ENCODE measurements at regions of chr2 and their contacts with region 1.

Region 1: DNA sequence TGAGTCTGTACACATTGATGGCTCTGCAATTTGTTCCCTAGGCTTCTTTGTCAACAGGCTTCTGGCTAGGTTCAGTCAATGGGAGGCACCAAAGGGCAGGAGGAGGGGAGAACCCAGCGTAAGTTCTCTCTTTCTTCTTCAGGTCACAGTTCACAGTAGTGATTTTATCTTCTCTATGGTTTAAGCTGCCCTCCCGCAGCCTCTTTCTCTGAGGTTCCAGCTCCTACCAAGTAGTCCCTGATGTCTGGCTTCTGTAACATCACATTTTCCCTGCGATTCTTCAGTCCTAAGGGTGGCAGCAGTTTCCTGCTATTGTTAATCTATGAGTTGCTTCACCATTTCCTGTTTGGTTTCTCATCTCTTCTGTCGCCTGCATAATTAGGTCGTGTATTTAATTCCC is 107.4 kb downstream of the CPO start:
- DNase-seq: peak; percentile 59
- H3K4me3 Mint-ChIP-seq: no peak overlapping the region
- H3K27ac Mint-ChIP-seq: peak overlapping the region; percentile 62
- H3K4me1 Mint-ChIP-seq: peaks cover 10% of the 10 kb centered on the region
- H3K27me3 Mint-ChIP-seq: no peaks in the 10 kb centered on the region

Region 2: DNA sequence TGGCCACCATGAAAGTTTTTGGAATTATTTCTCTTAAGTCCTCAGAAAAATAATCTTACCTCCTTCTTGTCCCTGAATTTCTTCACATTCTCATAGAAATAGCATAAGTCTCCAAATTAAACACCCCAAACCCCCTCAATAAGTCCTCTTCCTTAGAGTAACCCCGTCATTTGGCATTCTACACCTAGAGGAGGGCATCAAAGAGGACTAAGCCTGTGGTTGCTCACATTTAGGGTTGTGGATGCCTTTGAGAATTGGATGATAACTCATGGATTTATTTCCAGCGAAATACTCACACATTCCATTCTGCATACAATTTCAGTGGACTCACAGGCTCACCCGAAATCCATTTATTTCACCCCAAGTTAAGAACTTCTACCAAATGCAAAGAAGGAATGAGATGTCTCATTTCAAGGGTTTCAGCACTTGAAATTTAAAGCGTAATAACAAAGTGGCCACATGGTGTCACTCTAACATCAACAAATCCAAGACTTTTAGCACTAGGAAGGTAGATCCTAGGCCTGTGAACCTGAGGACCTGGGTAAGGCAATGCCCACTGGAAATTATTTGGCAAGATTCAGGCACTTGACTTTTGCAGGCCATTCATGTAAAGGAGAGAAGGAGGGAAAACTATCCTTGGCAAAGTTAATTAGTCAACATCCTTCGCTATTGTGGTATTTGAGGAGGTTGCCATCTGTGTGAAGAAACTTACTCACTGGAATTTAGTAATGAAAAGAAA is 353.2 kb before region 1 on chr2:
- CTCF ChIA-PET with region 1: no interaction called
- intact Hi-C with region 1: loop called (anchors 5 kb)
- DNase-seq: peak; percentile 48
- H3K4me3 Mint-ChIP-seq: no peak overlapping the region
- H3K27ac Mint-ChIP-seq: no peak overlapping the region
- H3K4me1 Mint-ChIP-seq: peaks cover 3% of the 10 kb centered on the region
- H3K27me3 Mint-ChIP-seq: no peaks in the 10 kb centered on the region

Region 3: DNA sequence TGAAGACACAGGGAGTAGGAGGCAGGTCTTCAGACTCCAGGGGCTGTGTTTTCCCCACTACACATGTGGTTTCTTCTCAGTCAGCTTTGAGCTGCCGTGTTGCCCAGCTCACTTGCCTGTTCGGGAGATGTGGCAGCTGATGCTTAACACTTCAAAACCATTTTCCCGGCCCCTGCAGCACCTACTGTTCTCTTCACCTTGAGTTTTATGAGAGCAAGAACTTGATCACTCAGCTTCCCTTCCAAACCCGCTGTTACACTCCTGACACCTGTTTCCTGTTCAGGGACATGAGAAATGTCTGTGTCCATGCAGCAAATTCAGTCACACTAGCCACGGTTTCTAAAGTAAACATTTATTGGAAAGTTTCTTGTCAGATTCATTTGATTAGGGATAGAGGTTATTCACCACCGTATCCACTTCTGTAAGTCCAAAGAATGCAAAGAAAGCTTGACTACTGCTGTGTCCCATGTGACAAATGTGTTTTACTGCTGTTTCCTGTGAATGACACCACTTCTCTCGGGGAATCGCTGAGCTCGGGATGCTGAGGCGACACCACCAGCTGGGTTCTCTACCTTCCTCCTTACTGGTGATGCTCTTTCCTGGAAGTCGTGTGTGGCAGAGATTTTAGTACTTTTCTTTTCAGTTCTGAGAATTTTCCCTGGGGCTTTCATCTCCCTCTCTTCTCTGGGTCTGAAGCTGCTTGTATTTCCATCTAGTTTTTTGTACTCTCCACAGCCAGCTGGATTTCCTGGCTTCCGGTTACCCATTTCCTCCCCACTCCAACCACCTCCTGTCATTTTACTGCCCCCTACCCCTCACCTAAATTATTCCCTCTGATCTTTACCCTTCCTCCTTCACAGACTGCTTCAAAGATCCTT is 27.3 kb after region 1 on chr2:
- CTCF ChIA-PET with region 1: interaction called, 4 read pairs
- intact Hi-C with region 1: loop called (anchors 1 kb)
- DNase-seq: peak; percentile 72
- H3K4me3 Mint-ChIP-seq: peak overlapping the region; percentile 64
- H3K27ac Mint-ChIP-seq: peak overlapping the region; percentile 85
- H3K4me1 Mint-ChIP-seq: peaks cover 27% of the 10 kb centered on the region
- H3K27me3 Mint-ChIP-seq: no peaks in the 10 kb centered on the region

Region 4: GRCh38 chr2:207223051-207223450 is 176.3 kb after region 1 on chr2:
- CTCF ChIA-PET with region 1: no interaction called
- intact Hi-C with region 1: loop called (anchors 1 kb)
- DNase-seq: peak; percentile 50
- H3K4me3 Mint-ChIP-seq: no peak overlapping the region
- H3K27ac Mint-ChIP-seq: peak overlapping the region; percentile 32
- H3K4me1 Mint-ChIP-seq: peaks cover 43% of the 10 kb centered on the region
- H3K27me3 Mint-ChIP-seq: no peaks in the 10 kb centered on the region

Region 5: GRCh38 chr2:207311316-207312005 is 264.7 kb after region 1 on chr2:
- CTCF ChIA-PET with region 1: no interaction called
- intact Hi-C with region 1: loop called (anchors 1 kb)
- DNase-seq: peak; percentile 78
- H3K4me3 Mint-ChIP-seq: peak overlapping the region; percentile 13
- H3K27ac Mint-ChIP-seq: peak overlapping the region; percentile 78
- H3K4me1 Mint-ChIP-seq: peaks cover 22% of the 10 kb centered on the region
- H3K27me3 Mint-ChIP-seq: peaks cover 4% of the 10 kb centered on the region

Region 6: GRCh38 chr2:207473049-207473930 is 426.6 kb after region 1 on chr2:
- CTCF ChIA-PET with region 1: interaction called, 21 read pairs
- intact Hi-C with region 1: loop called (anchors 1 kb)
- DNase-seq: peak; percentile 79
- H3K4me3 Mint-ChIP-seq: no peak overlapping the region
- H3K27ac Mint-ChIP-seq: no peak overlapping the region
- H3K4me1 Mint-ChIP-seq: peaks cover 18% of the 10 kb centered on the region
- H3K27me3 Mint-ChIP-seq: no peaks in the 10 kb centered on the region

Region 7: GRCh38 chr2:207902821-207903220 is 856.1 kb after region 1 on chr2:
- CTCF ChIA-PET with region 1: no interaction called
- intact Hi-C with region 1: no loop called
- DNase-seq: no peak
- H3K4me3 Mint-ChIP-seq: no peak overlapping the region
- H3K27ac Mint-ChIP-seq: no peak overlapping the region
- H3K4me1 Mint-ChIP-seq: no peaks in the 10 kb centered on the region
- H3K27me3 Mint-ChIP-seq: no peaks in the 10 kb centered on the region